ENCODE measurements at regions of chr13 and their contacts with region 1.

Region 1: GRCh38 chr13:51125498-51126226 is 14.6 kb upstream of the C13orf42 start:
- DNase-seq: peak; percentile 66
- ATAC-seq: peak; percentile 85
- H3K4me3 Mint-ChIP-seq: no peak overlapping the region
- H3K27ac Mint-ChIP-seq: 0 out of 2 replicates have a peak overlapping the region, but pooled peaks have one; percentile 4
- H3K4me1 Mint-ChIP-seq: peaks cover 41% of the 10 kb centered on the region
- H3K27me3 Mint-ChIP-seq: peaks cover 6% of the 10 kb centered on the region
- CTCF ChIP-seq: peak; percentile 77

Region 2: GRCh38 chr13:51148952-51149573 is 23.4 kb after region 1 on chr13:
- CTCF ChIA-PET with region 1: interaction called, 64 read pairs
- POLR2A ChIA-PET with region 1: interaction called, 3 read pairs
- DNase-seq: peak; percentile 68
- ATAC-seq: peak; percentile 55
- H3K4me3 Mint-ChIP-seq: no peak overlapping the region
- H3K27ac Mint-ChIP-seq: peak overlapping the region; percentile 95
- H3K4me1 Mint-ChIP-seq: peaks cover 71% of the 10 kb centered on the region
- H3K27me3 Mint-ChIP-seq: no peaks in the 10 kb centered on the region; the same call in 1 of the 2 replicates
- CTCF ChIP-seq: no peak

Region 3: DNA sequence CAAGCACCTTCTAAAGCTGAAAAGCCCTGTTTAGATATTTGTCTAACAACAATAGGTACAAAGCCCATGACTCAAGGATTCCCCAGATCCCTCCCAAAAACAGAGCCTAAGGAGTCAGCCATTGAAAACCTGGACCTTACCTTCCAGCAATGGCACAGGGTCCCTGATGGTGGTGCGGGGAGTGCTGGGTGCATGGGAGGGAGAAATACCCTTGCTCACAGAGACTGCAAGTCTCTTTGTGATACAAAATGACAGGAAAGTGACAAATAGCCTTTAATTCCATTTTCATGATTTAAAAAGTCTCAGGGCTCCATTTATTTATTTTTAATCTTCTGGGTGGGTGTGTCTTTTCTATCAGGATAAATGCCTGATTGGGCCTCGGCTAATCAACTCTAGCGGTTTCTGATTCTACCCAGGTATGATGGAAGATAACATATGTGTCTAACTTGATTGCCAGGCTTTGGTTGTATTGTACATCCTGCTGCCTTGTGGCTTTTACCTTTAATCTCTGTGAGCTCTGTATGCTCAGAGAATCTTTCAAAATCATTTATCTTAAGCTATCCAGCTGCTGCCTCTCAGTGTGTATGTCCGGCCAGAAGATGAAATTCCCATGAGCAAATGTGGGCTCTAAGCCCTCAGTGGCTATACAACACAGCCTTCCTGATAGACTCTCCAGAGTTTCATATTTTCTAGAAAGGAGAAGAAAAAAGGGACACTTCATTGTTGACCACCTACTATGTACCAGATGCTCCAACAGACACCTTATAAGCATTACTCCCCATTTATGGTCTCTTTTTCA is 41.9 kb after region 1 on chr13:
- CTCF ChIA-PET with region 1: interaction called, 17 read pairs
- POLR2A ChIA-PET with region 1: no interaction called
- DNase-seq: no peak
- ATAC-seq: no peak
- H3K4me3 Mint-ChIP-seq: no peak overlapping the region
- H3K27ac Mint-ChIP-seq: peak overlapping the region; percentile 99
- H3K4me1 Mint-ChIP-seq: peaks cover 38% of the 10 kb centered on the region
- H3K27me3 Mint-ChIP-seq: no peaks in the 10 kb centered on the region; the same call in none of the 2 replicates
- CTCF ChIP-seq: no peak

Region 4: GRCh38 chr13:51181786-51182383 is 56.2 kb after region 1 on chr13:
- CTCF ChIA-PET with region 1: interaction called, 13 read pairs
- POLR2A ChIA-PET with region 1: no interaction called
- DNase-seq: no peak
- ATAC-seq: 0 out of 2 replicates have a peak, but pooled peaks have one; percentile 11
- H3K4me3 Mint-ChIP-seq: no peak overlapping the region
- H3K27ac Mint-ChIP-seq: peak overlapping the region; percentile 20
- H3K4me1 Mint-ChIP-seq: peaks cover 48% of the 10 kb centered on the region
- H3K27me3 Mint-ChIP-seq: no peaks in the 10 kb centered on the region
- CTCF ChIP-seq: no peak

Region 5: GRCh38 chr13:51235756-51236490 is 110.3 kb after region 1 on chr13:
- CTCF ChIA-PET with region 1: interaction called, 10 read pairs
- POLR2A ChIA-PET with region 1: no interaction called
- DNase-seq: no peak
- ATAC-seq: peak; percentile 62
- H3K4me3 Mint-ChIP-seq: 0 out of 2 replicates have a peak overlapping the region, but pooled peaks have one; percentile 18
- H3K27ac Mint-ChIP-seq: peak overlapping the region; percentile 98
- H3K4me1 Mint-ChIP-seq: peaks cover 54% of the 10 kb centered on the region
- H3K27me3 Mint-ChIP-seq: no peaks in the 10 kb centered on the region
- CTCF ChIP-seq: no peak

Region 6: DNA sequence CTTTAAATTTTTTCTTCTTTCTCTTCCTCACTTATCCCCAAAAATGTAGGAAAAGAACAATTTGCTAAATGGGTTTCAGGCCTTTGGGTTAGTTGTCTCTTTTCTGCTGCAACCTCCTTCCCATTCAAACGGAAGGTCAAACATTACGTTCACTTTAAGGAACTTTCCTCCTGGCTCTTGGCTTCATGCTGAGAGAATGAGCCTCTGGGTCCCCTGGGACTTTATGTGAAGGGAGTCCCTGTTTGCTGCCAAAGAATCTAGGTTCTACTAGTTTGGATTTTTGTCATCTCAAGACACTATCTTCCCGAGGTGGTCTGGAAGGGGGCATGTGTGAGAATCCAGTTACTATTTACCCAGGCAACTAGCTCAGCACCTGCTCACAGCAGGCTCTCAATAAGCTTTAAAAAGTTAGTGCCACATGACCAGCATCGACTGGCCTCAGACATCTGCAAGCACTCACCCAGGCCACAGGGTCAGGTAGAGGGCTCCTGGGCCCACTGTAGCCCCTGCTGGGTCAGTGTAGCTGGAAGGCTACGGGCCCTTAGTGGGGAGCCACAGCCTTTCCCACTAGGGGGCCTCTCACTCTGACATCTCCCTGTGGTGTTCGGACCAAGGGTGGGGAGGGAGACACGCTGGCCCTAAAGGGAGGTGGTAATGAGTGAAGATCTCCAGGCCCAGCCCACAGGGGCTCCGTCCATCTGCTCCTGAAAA is 137.0 kb after region 1 on chr13:
- CTCF ChIA-PET with region 1: interaction called, 13 read pairs
- POLR2A ChIA-PET with region 1: no interaction called
- DNase-seq: no peak
- ATAC-seq: peak; percentile 35
- H3K4me3 Mint-ChIP-seq: peak overlapping the region; percentile 14; the same call in 1 of the 2 replicates
- H3K27ac Mint-ChIP-seq: peak overlapping the region; percentile 71
- H3K4me1 Mint-ChIP-seq: peaks cover 55% of the 10 kb centered on the region
- H3K27me3 Mint-ChIP-seq: no peaks in the 10 kb centered on the region
- CTCF ChIP-seq: no peak

Region 7: GRCh38 chr13:51797664-51798488 is 672.2 kb after region 1 on chr13:
- CTCF ChIA-PET with region 1: interaction called, 35 read pairs
- POLR2A ChIA-PET with region 1: no interaction called
- DNase-seq: peak; percentile 66
- ATAC-seq: peak; percentile 84
- H3K4me3 Mint-ChIP-seq: no peak overlapping the region
- H3K27ac Mint-ChIP-seq: no peak overlapping the region
- H3K4me1 Mint-ChIP-seq: peaks cover 45% of the 10 kb centered on the region
- H3K27me3 Mint-ChIP-seq: no peaks in the 10 kb centered on the region
- CTCF ChIP-seq: 0 out of 2 replicates have a peak, but pooled peaks have one; percentile 33